Aorta (tissue), 5 donors: ENCODE measurements at regions of chr2 and their contacts with region 1.

Region 1: GRCh38 chr2:85648619-85649018 is 19.4 kb downstream of the SFTPB start:
- DNase-seq: no peak
- ATAC-seq: no peak
- H3K4me3 ChIP-seq: no peak overlapping the region
- H3K27ac ChIP-seq: no peak overlapping the region
- H3K4me1 ChIP-seq: no peaks in the 10 kb centered on the region
- H3K27me3 ChIP-seq: no peaks in the 10 kb centered on the region

Region 2: GRCh38 chr2:85750587-85751575 is 102.3 kb after region 1 on chr2:
- intact Hi-C with region 1: no loop called
- DNase-seq: peak; percentile 88 to 90
- ATAC-seq: peak; percentile 60
- H3K4me3 ChIP-seq: no peak overlapping the region
- H3K27ac ChIP-seq: peak overlapping the region in 1 of 2 donors; percentile 57
- H3K4me1 ChIP-seq: peaks cover 0 to 3% of the 10 kb centered on the region in 2 donors
- H3K27me3 ChIP-seq: no peaks in the 10 kb centered on the region

Region 3: DNA sequence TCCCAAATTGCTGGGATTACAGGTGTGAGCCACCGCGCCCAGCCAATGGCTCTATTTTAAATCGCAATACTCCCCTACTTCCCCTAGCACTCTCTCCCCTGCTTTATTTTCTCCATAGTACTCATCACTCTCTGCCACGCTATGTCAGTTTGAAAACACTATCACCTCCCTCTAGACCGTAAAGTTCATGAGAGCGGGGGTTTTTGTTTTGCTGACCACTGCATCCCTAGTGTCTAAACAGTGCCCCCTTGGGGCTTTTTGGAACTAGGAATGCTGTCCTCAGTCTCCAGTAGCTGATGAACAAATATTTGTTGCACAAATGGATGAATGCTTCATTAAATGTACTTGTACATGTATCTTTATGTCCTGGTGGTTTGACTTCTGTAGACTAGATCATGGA is 149.3 kb after region 1 on chr2:
- intact Hi-C with region 1: loop called in 1 of 2 experiments (anchors 10 kb)
- DNase-seq: peak in 1 of 2 donors; percentile 4
- ATAC-seq: no peak
- H3K4me3 ChIP-seq: no peak overlapping the region
- H3K27ac ChIP-seq: peak overlapping the region in 1 of 2 donors; percentile 11
- H3K4me1 ChIP-seq: no peaks in the 10 kb centered on the region
- H3K27me3 ChIP-seq: no peaks in the 10 kb centered on the region